Activated CD4-positive, alpha-beta T cell treated with anti-CD3 and anti-CD28 coated beads, Interleukin-2, amount 10 ng/mL, durations not matched to agents 24 days and 14 days (primary cell): ENCODE measurements at regions of chr3 and their contacts with region 1.

Region 1: DNA sequence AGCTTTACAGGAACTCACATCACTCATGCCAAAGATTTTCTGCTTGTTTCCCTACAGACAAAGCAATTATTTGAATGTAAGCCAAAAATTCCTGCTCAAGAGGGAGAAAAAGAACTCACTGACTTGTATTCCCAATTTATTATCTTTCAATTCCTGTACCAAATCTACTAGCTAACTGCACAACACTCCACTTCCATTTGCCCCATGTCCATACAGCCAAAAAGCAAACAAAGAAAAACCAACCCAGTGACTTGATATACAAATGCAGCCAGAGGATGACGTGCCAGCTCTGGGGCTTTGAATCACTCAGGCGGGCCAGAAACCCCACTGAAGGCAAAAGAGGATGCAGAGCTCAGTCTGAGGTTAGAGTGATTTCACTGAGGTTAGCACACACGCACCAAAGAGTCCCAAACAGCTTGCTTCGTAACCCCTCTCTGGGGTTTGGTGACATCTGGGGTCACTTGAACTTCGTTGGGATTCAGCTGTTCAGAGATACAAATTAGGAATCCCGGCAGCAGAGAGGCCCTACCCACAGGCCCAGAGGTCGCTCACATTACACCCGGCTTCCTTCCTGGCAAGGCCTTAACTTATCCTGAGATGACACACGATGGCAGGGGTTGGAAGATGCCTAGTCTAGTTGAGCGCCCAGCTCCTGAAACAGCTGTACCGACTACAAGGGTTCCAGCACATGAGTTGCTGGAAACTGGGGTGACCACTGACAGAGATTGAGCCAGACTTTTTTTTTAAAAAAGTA is 1.6 kb downstream of the RFTN1 start:
- DNase-seq: peak; percentile 93
- H3K4me3 Mint-ChIP-seq: peak overlapping the region; percentile 95
- H3K27ac Mint-ChIP-seq: peak overlapping the region; percentile 85
- H3K4me1 Mint-ChIP-seq: peaks cover 64% of the 10 kb centered on the region
- H3K27me3 Mint-ChIP-seq: no peaks in the 10 kb centered on the region

Region 2: DNA sequence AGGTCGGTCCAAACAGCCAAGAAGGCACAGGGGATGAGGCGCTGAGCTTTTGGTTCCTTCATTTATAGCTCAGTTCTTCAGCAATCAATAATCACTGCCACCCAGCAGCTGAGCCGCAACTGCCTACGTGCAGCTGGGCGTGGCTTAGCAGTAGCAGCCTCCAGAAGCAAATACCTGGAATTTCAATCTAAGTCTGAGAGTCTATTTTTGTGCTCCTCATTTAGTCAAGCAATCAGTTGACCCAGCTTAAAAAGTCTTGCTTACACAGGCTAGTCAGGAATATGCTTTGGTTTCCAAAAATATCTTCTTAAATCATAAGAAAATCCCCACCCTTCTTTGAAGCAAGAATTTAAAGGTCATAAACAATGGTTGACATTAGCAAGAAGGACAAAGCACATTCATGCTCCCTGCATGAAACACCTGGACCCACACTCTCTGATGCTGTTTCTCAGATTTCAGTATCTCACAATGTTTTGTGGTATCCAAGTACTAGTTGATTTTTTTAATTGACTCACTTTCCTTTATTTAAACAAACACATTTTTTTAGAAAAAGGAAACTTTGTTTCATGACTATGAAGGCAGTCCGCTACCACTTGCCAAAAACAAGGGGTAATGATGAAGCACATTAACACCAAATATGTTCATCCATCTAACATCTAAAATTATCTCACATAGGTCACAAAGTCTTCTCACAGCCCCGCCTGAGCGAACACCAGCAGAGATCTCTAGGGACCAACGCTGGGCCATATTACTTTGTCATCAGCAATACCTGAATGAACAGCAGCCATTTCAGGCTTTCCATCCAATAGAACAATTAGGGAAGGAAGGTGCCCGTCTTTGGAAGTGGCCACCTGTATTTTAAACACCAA is 140.8 kb before region 1 on chr3:
- intact Hi-C with region 1: loop called (anchors 2 kb)
- DNase-seq: peak; percentile 72
- H3K4me3 Mint-ChIP-seq: peak overlapping the region; percentile 30
- H3K27ac Mint-ChIP-seq: peak overlapping the region; percentile 90
- H3K4me1 Mint-ChIP-seq: peaks cover 74% of the 10 kb centered on the region
- H3K27me3 Mint-ChIP-seq: no peaks in the 10 kb centered on the region

Region 3: GRCh38 chr3:16476641-16477455 is 35.0 kb before region 1 on chr3:
- intact Hi-C with region 1: loop called (anchors 2 kb)
- DNase-seq: peak; percentile 70
- H3K4me3 Mint-ChIP-seq: peak overlapping the region; percentile 47
- H3K27ac Mint-ChIP-seq: peak overlapping the region; percentile 59
- H3K4me1 Mint-ChIP-seq: peaks cover 50% of the 10 kb centered on the region
- H3K27me3 Mint-ChIP-seq: no peaks in the 10 kb centered on the region

Region 4: GRCh38 chr3:16550676-16551341 is 39.0 kb after region 1 on chr3:
- intact Hi-C with region 1: loop called (anchors 2 kb)
- DNase-seq: peak; percentile 94
- H3K4me3 Mint-ChIP-seq: no peak overlapping the region
- H3K27ac Mint-ChIP-seq: peak overlapping the region; percentile 71
- H3K4me1 Mint-ChIP-seq: peaks cover 11% of the 10 kb centered on the region
- H3K27me3 Mint-ChIP-seq: peaks cover 13% of the 10 kb centered on the region

Region 5: GRCh38 chr3:17742108-17742879 is 1230.4 kb after region 1 on chr3 and contains the start of gene TBC1D5:
- intact Hi-C with region 1: loop called (anchors 10 kb)
- DNase-seq: peak; percentile 97
- H3K4me3 Mint-ChIP-seq: peak within 1 kb of the TSS; percentile 95
- H3K27ac Mint-ChIP-seq: peak within 1 kb of the TSS; percentile 98
- H3K4me1 Mint-ChIP-seq: peaks cover 34% of the 10 kb centered on the region
- H3K27me3 Mint-ChIP-seq: no peaks in the 10 kb centered on the region
- total RNA-seq, gene TBC1D5: 38.5 and 39.0 TPM in 2 replicates